Activated CD4-positive, alpha-beta T cell treated with anti-CD3 and anti-CD28 coated beads for 36 hours (primary cell): ENCODE measurements at regions of chr1 and their contacts with region 1.

Region 1: GRCh38 chr1:43073490-43074230 is 98.4 kb downstream of the EBNA1BP2 start:
- DNase-seq: peak; percentile 83
- ATAC-seq: peak; percentile 93
- H3K4me3 Mint-ChIP-seq: no peak overlapping the region
- H3K27ac Mint-ChIP-seq: no peak overlapping the region
- H3K4me1 Mint-ChIP-seq: peaks cover 4% of the 10 kb centered on the region
- H3K27me3 Mint-ChIP-seq: no peaks in the 10 kb centered on the region

Region 2: GRCh38 chr1:42518908-42519307 is 554.8 kb before region 1 on chr1:
- CTCF ChIA-PET with region 1: no interaction called
- POLR2A ChIA-PET with region 1: no interaction called
- intact Hi-C with region 1: no loop called
- DNase-seq: no peak
- ATAC-seq: no peak
- H3K4me3 Mint-ChIP-seq: no peak overlapping the region
- H3K27ac Mint-ChIP-seq: no peak overlapping the region
- H3K4me1 Mint-ChIP-seq: no peaks in the 10 kb centered on the region
- H3K27me3 Mint-ChIP-seq: no peaks in the 10 kb centered on the region

Region 3: GRCh38 chr1:42576935-42577334 is 496.7 kb before region 1 on chr1:
- CTCF ChIA-PET with region 1: interaction called, 6 read pairs
- POLR2A ChIA-PET with region 1: no interaction called
- intact Hi-C with region 1: loop called in 1 of 2 experiments (anchors 1 kb)
- DNase-seq: no peak
- ATAC-seq: no peak
- H3K4me3 Mint-ChIP-seq: no peak overlapping the region
- H3K27ac Mint-ChIP-seq: no peak overlapping the region
- H3K4me1 Mint-ChIP-seq: no peaks in the 10 kb centered on the region
- H3K27me3 Mint-ChIP-seq: no peaks in the 10 kb centered on the region

Region 4: DNA sequence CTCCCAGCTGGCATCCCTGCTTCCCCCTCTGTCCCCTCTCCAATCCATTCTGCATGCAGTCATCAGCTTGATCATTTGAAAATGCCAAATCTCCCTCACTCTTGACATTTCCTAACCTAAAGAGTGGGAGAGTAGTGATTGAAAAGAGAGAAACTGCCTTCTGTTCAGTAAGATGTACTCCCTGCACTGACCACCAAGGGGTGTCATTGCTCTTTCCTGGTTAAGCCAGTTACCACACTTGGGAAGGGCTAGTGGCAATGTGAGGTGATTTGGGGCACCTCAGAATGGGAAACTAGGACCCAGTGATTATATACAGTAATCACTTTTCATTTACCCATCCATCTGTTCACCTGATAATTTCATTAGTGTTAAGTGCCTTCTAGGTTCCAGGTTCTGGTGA is 295.8 kb before region 1 on chr1:
- CTCF ChIA-PET with region 1: interaction called, 31 read pairs
- POLR2A ChIA-PET with region 1: no interaction called
- intact Hi-C with region 1: loop called (anchors 1 to 2 kb)
- DNase-seq: peak; percentile 55
- ATAC-seq: peak; percentile 79
- H3K4me3 Mint-ChIP-seq: no peak overlapping the region
- H3K27ac Mint-ChIP-seq: no peak overlapping the region
- H3K4me1 Mint-ChIP-seq: peaks cover 14% of the 10 kb centered on the region
- H3K27me3 Mint-ChIP-seq: no peaks in the 10 kb centered on the region

Region 5: GRCh38 chr1:42904434-42904833 is 169.2 kb before region 1 on chr1:
- CTCF ChIA-PET with region 1: interaction called, 12 read pairs
- POLR2A ChIA-PET with region 1: no interaction called
- intact Hi-C with region 1: no loop called
- DNase-seq: no peak
- ATAC-seq: no peak
- H3K4me3 Mint-ChIP-seq: no peak overlapping the region
- H3K27ac Mint-ChIP-seq: no peak overlapping the region
- H3K4me1 Mint-ChIP-seq: no peaks in the 10 kb centered on the region
- H3K27me3 Mint-ChIP-seq: peaks cover 5% of the 10 kb centered on the region

Region 6: GRCh38 chr1:42913426-42914091 is 160.1 kb before region 1 on chr1:
- CTCF ChIA-PET with region 1: interaction called, 427 read pairs
- POLR2A ChIA-PET with region 1: interaction called, 10 read pairs
- intact Hi-C with region 1: loop called (anchors 1 kb)
- DNase-seq: peak; percentile 82
- ATAC-seq: peak; percentile 90
- H3K4me3 Mint-ChIP-seq: no peak overlapping the region
- H3K27ac Mint-ChIP-seq: no peak overlapping the region
- H3K4me1 Mint-ChIP-seq: peaks cover 5% of the 10 kb centered on the region
- H3K27me3 Mint-ChIP-seq: peaks cover 9% of the 10 kb centered on the region

Region 7: DNA sequence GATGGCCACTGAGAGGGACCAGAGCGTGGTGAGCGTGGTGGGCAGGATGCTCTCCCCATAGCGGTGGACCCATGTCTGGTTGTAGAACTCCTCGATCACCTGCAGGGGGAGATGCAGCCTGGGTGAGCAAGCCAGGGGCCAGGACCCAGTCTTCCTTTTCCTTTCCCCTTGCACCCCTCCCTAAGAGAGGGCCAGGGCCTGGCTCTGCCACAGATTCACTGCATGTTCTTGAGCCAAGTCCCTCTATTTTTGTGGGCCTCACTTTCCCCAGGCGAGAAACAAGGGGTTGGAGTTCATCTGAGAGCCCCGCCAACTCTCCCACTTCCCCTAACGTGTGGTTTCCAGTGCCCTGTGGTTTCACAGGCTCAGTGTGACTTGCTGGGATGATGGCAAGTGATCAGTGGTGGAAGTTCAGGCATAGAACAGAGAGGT is 142.5 kb before region 1 on chr1:
- CTCF ChIA-PET with region 1: interaction called, 92 read pairs
- POLR2A ChIA-PET with region 1: no interaction called
- intact Hi-C with region 1: no loop called
- DNase-seq: peak; percentile 64
- ATAC-seq: peak; percentile 31
- H3K4me3 Mint-ChIP-seq: peak overlapping the region; percentile 62
- H3K27ac Mint-ChIP-seq: peak overlapping the region; percentile 92
- H3K4me1 Mint-ChIP-seq: peaks cover 63% of the 10 kb centered on the region
- H3K27me3 Mint-ChIP-seq: no peaks in the 10 kb centered on the region

Region 8: GRCh38 chr1:42936309-42937078 is 137.2 kb before region 1 on chr1:
- CTCF ChIA-PET with region 1: interaction called, 12 read pairs
- POLR2A ChIA-PET with region 1: no interaction called
- intact Hi-C with region 1: no loop called
- DNase-seq: peak; percentile 54
- ATAC-seq: peak; percentile 28
- H3K4me3 Mint-ChIP-seq: no peak overlapping the region
- H3K27ac Mint-ChIP-seq: peak overlapping the region; percentile 88
- H3K4me1 Mint-ChIP-seq: peaks cover 96% of the 10 kb centered on the region
- H3K27me3 Mint-ChIP-seq: no peaks in the 10 kb centered on the region